Heart right ventricle (tissue), 16 donors: ENCODE measurements at regions of chr12 and their contacts with region 1.

Region 1: GRCh38 chr12:21607701-21608100 is 3.1 kb upstream of the GYS2 start:
- DNase-seq: no peak
- ATAC-seq: peak in 4 of 8 donors; percentile 27 to 63 (median 47)
- H3K4me3 ChIP-seq: no peak overlapping the region
- H3K27ac ChIP-seq: no peak overlapping the region
- H3K4me1 ChIP-seq: peaks cover 0 to 7% (median 0%) of the 10 kb centered on the region in 9 donors
- H3K27me3 ChIP-seq: no peaks in the 10 kb centered on the region
- CTCF ChIP-seq: peak in 7 of 9 donors; percentile 41 to 70 (median 59)

Region 2: DNA sequence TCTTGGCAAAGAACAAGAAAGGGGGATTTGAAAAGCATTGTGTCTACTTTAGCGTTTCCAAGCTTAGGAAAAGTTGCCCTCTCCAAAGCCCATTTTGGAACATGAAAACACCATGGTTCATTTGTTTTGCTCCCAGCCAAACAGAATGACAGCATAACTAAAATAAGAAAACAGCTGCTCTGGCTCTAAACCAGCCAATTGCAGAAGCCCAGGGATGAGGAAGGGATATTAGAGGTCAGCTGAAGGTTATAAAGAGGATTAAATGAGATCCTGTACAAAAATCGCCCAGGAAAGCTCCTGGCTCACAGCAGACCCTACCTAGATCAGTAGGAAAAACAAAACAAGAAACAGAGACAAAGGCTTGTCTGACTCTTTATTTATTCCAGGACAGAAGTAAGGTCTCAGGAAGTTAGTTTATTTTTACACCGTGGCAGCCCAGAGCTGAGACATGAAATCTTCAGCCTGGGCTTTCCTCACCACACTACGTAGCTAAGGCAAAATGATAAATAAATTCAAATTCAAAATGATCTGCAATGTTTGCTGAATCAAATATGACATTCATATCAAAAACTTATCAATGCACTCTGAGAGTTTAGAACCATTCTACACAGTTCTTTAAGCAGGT is 55.7 kb before region 1 on chr12:
- intact Hi-C with region 1: no loop called
- DNase-seq: peak in 1 of 2 donors; percentile 51
- ATAC-seq: peak; percentile 82 to 93 (median 91)
- H3K4me3 ChIP-seq: no peak overlapping the region
- H3K27ac ChIP-seq: peak overlapping the region; percentile 12 to 77 (median 56)
- H3K4me1 ChIP-seq: peaks cover 0 to 29% (median 14%) of the 10 kb centered on the region in 9 donors
- H3K27me3 ChIP-seq: no peaks in the 10 kb centered on the region
- CTCF ChIP-seq: no peak

Region 3: DNA sequence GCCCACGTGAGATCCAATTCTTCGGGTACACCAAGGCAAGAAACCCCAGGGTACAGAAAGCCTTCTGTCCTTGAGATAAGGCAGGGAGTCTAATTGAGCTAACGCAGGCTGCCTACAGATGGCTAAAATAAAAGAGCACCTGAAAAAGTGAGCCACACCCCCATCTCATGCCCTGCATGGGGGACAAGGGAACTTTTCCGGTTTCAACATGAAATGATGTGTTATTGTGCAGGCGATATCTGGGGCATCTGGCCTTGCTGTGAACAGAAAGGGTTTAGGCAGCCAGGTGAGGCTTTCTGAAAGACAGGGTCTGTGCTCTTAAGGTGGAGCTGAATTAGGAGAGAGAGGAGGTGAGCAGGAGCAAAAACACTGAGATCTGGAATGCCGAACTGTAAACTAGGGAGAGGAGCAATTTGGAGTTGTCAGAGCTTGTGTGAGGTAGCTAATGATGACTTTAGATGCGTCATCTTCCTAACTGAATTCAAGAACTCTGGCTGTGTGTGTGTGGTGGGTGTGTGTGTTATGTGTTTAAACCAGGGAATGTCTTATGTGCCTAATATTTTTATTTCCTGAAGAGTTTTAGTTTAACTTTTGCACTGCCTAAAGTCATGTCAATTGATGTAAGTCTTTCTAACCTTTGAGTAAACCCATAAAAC is 70.0 kb after region 1 on chr12:
- intact Hi-C with region 1: loop called (anchors 1 to 5 kb)
- DNase-seq: no peak
- ATAC-seq: no peak
- H3K4me3 ChIP-seq: no peak overlapping the region
- H3K27ac ChIP-seq: no peak overlapping the region
- H3K4me1 ChIP-seq: peaks cover 0 to 17% (median under 1%) of the 10 kb centered on the region in 9 donors
- H3K27me3 ChIP-seq: no peaks in the 10 kb centered on the region
- CTCF ChIP-seq: no peak

Region 4: DNA sequence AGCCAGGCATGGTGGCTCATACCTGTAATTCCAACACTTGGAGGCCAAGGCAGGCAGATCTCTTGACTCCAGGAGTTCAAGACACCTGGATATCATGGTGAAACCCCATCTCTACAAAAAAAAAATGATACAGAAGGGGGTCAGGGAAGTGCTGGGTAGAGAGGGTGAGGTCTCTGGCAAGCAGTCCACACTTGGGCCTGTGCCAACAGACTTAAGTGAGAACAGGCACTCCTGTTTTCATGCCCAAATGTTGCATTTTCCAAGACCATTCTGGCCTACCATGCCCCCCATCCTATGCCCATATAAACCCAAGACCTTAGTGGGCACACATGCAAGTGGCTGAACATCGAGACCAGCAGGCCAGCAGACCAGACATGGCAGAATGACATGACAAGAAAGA is 422.3 kb after region 1 on chr12:
- intact Hi-C with region 1: loop called in 1 of 10 experiments (anchors 10 kb)
- DNase-seq: no peak
- ATAC-seq: no peak
- H3K4me3 ChIP-seq: no peak overlapping the region
- H3K27ac ChIP-seq: no peak overlapping the region
- H3K4me1 ChIP-seq: peaks cover 0 to 9% (median 3%) of the 10 kb centered on the region in 9 donors
- H3K27me3 ChIP-seq: no peaks in the 10 kb centered on the region
- CTCF ChIP-seq: no peak